ENCODE measurements at regions of chr4 and their contacts with region 1.

Region 1: GRCh38 chr4:94406668-94407437 is 44.9 kb upstream of the PDLIM5 start:
- DNase-seq: peak; percentile 84
- ATAC-seq: peak; percentile 72

Region 2: DNA sequence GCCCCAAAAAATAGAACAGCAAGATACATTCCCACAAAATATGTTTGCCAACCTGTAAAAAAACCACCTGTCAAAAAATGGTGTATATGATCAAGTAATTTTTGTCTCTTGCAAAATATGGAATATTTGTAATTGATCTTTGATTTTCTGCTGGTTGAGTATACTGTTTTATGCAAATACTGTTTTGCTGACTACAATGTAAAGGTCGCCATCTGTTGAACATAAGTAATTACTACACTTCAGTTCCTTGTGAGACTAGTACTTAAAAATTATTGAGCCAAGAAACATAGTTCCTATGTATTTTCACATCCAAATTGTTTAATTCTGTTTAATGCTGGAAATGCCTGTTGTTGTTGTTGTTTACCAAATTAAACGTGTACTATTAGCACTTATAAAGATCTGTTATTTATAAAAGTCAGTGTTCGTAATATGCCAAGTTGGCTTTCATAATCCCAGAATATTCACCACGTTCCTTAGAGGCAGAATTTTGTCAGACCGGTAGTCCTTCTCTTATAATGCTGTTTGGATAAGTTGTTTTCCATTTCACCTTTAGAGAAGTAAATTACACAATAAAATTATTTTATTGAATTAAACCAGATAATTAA is 189.1 kb after region 1 on chr4:
- intact Hi-C with region 1: loop called (anchors 5 kb)
- DNase-seq: no peak
- ATAC-seq: peak; percentile 67